ENCODE measurements at regions of chr5 and their contacts with region 1.

Region 1: DNA sequence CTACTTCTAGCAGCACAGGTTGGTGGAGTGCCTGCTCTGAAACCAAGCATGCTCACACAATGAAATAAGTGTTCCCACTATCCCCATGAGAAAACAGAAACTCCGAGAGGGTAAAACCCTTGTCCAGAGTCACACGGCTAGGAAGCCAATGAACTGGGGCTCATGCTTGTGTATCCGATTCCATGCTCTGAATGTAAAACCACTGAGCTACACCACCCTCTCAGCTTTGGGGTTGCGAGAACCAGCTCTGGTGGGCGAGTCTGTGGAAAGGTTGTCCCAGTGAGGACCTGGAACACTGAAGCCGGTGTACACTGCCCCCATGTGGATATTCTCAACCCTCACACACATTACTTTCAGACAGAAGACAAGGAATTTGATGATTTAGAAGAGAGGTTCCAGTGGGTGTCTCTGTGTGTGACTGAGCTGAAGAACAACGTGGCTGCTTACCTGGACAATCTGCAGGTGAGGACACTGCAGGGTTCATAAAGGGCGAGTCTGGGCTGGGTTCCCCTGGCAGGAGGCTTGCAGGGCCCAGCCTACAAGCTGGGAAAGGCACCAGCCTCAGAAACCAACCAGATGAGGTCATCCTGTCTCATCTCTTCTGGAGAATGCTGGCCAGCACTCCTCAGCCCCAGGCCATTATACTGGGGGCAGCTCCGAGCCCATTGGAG is 37.4 kb downstream of the ARHGEF37 start:
- DNase-seq: peak; percentile 35
- H3K4me3 ChIP-seq: no peak overlapping the region
- H3K27me3 ChIP-seq: peaks cover 3% of the 10 kb centered on the region
- CTCF ChIP-seq: peak; percentile 77

Region 2: GRCh38 chr5:149367249-149367971 is 251.3 kb before region 1 on chr5:
- CTCF ChIA-PET with region 1: interaction called, 23 read pairs
- POLR2A ChIA-PET with region 1: no interaction called
- DNase-seq: no peak
- H3K4me3 ChIP-seq: no peak overlapping the region
- H3K27me3 ChIP-seq: no peaks in the 10 kb centered on the region
- CTCF ChIP-seq: peak; percentile 91

Region 3: GRCh38 chr5:149567226-149567625 is 51.5 kb before region 1 on chr5:
- CTCF ChIA-PET with region 1: interaction called, 23 read pairs
- POLR2A ChIA-PET with region 1: no interaction called
- DNase-seq: no peak
- H3K4me3 ChIP-seq: no peak overlapping the region
- H3K27me3 ChIP-seq: no peaks in the 10 kb centered on the region
- CTCF ChIP-seq: no peak

Region 4: GRCh38 chr5:149586791-149587283 is 31.9 kb before region 1 on chr5:
- CTCF ChIA-PET with region 1: interaction called, 19 read pairs
- POLR2A ChIA-PET with region 1: no interaction called
- DNase-seq: no peak
- H3K4me3 ChIP-seq: no peak overlapping the region
- H3K27me3 ChIP-seq: no peaks in the 10 kb centered on the region
- CTCF ChIP-seq: no peak

Region 5: DNA sequence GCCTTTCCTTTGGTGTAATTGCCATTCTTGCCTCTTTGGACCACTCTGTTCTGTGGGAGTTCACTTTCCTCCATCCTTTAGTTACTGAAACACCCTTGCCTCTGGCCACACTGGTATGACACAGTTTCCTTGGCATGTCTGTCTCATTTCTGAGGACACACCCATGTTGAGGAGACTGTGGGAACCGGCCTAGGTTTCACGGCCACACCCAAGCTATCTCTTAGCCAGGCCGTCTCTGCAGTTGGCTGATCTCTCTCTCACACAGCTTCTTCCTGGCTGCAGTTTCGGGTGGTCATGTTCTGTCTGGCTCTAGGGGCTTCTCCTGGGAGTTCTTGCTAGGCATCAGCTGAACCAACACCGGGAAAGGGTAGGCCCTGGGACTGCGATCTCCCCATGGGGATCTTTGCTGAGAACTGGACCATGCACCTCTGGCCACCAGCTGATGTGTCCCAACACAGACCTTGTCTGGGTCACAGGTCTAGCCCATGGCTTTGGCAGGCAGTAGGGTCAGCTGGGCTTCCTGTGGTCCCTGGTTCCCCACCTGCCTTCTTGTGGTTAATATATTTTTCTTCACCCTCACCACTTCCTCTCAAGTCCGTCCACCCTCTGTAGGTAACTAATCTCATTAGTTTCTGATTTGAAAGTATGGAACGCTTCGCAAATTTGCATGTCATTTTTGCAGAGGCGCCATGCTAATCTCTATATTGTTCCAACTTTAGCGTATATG is 12.6 kb before region 1 on chr5:
- CTCF ChIA-PET with region 1: interaction called, 47 read pairs
- POLR2A ChIA-PET with region 1: no interaction called
- DNase-seq: peak; percentile 91
- H3K4me3 ChIP-seq: no peak overlapping the region
- H3K27me3 ChIP-seq: no peaks in the 10 kb centered on the region
- CTCF ChIP-seq: no peak

Region 6: GRCh38 chr5:149697001-149697400 is 78.3 kb after region 1 on chr5:
- CTCF ChIA-PET with region 1: no interaction called
- POLR2A ChIA-PET with region 1: no interaction called
- DNase-seq: no peak
- H3K4me3 ChIP-seq: no peak overlapping the region
- H3K27me3 ChIP-seq: peaks cover 21% of the 10 kb centered on the region
- CTCF ChIP-seq: no peak

Region 7: GRCh38 chr5:149724130-149724840 is 105.6 kb after region 1 on chr5:
- CTCF ChIA-PET with region 1: no interaction called
- POLR2A ChIA-PET with region 1: no interaction called
- DNase-seq: no peak
- H3K4me3 ChIP-seq: no peak overlapping the region
- H3K27me3 ChIP-seq: peaks cover 34% of the 10 kb centered on the region
- CTCF ChIP-seq: no peak

Measured in BJ (cell line).